Endothelial cell of umbilical vein (primary cell): ENCODE measurements at regions of chr20 and their contacts with region 1.

Region 1: GRCh38 chr20:32902456-32903420 is 44.0 kb downstream of the EFCAB8 start:
- DNase-seq: peak; percentile 32
- H3K4me3 ChIP-seq: no peak overlapping the region
- H3K27ac ChIP-seq: no peak overlapping the region
- H3K4me1 ChIP-seq: no peaks in the 10 kb centered on the region
- H3K27me3 ChIP-seq: no peaks in the 10 kb centered on the region
- CTCF ChIP-seq: peak; percentile 89 to 90
- POLR2A ChIP-seq: no peak

Region 2: DNA sequence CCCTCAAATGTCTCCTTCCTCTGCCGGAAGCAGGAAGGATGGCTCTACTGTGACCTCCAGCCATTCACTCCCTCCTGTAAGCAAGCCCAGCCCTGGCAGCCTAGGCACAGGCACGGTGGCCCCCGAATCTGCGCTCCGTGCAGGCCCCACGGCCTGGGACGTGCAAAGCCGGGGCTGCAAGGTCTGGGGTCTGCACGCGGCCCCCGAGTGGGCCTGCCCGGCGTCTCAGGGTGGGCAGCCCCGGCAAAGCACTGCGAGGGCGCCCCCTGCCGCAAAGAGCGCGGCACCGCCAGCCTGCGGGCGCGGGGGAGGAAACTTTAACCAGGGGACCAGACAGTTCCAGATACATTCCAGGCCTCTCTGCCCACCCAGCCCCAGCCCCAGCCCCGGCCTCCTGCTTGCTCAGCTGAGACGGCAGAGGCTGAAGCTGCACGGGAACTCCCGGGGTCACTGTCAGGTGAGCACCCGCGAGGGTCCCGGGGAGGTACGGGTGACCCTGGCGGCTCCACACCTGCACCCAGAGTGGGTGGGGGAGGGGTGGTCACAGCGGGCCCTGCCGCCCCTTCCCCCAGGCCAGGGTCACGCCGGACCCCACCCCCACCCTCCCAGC is 445.8 kb before region 1 on chr20:
- CTCF ChIA-PET with region 1: no interaction called
- POLR2A ChIA-PET with region 1: no interaction called
- dilution Hi-C with region 1: no loop called
- intact Hi-C with region 1: no loop called
- DNase-seq: no peak
- H3K4me3 ChIP-seq: no peak overlapping the region
- H3K27ac ChIP-seq: no peak overlapping the region
- H3K4me1 ChIP-seq: peaks cover 20% of the 10 kb centered on the region
- H3K27me3 ChIP-seq: no peaks in the 10 kb centered on the region
- CTCF ChIP-seq: peak; percentile 67 to 75
- POLR2A ChIP-seq: no peak

Region 3: GRCh38 chr20:32930181-32930580 is 27.4 kb after region 1 on chr20:
- CTCF ChIA-PET with region 1: no interaction called
- POLR2A ChIA-PET with region 1: no interaction called
- dilution Hi-C with region 1: no loop called
- intact Hi-C with region 1: no loop called
- DNase-seq: no peak
- H3K4me3 ChIP-seq: no peak overlapping the region
- H3K27ac ChIP-seq: no peak overlapping the region
- H3K4me1 ChIP-seq: no peaks in the 10 kb centered on the region
- H3K27me3 ChIP-seq: peaks cover 0 to 2% of the 10 kb centered on the region in 2 experiments
- CTCF ChIP-seq: no peak
- POLR2A ChIP-seq: no peak

Region 4: GRCh38 chr20:32945710-32946221 is 43.0 kb after region 1 on chr20:
- CTCF ChIA-PET with region 1: interaction called, 104 read pairs
- POLR2A ChIA-PET with region 1: no interaction called
- dilution Hi-C with region 1: no loop called
- intact Hi-C with region 1: loop called (anchors 1 kb)
- DNase-seq: peak; percentile 37
- H3K4me3 ChIP-seq: no peak overlapping the region
- H3K27ac ChIP-seq: no peak overlapping the region
- H3K4me1 ChIP-seq: no peaks in the 10 kb centered on the region
- H3K27me3 ChIP-seq: peaks cover 17 to 29% of the 10 kb centered on the region in 2 experiments
- CTCF ChIP-seq: peak; percentile 23 to 41
- POLR2A ChIP-seq: no peak

Region 5: DNA sequence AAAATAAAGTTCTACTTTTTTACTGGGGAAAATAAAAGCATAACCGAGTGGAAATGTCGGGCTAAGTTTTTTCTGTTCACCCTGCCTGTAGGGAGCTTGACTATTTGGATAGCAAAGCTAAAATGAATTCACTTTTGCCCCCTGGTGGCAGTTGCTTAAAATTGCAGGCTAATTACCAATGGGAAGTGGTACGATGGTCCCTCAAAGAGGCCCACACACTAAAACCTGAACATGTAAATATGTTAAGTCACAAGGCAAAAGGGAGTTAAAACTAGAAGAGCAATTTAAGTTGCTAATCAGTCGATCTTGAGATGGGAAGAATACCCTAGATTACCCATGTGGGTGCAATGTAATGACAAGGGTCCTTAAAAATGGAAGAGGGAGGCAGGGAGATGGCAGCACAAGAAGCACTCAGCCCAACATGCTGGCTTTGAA is 102.4 kb after region 1 on chr20:
- CTCF ChIA-PET with region 1: interaction called, 28 read pairs
- POLR2A ChIA-PET with region 1: no interaction called
- dilution Hi-C with region 1: no loop called
- intact Hi-C with region 1: loop called (anchors 1 kb)
- DNase-seq: no peak
- H3K4me3 ChIP-seq: no peak overlapping the region
- H3K27ac ChIP-seq: no peak overlapping the region
- H3K4me1 ChIP-seq: no peaks in the 10 kb centered on the region
- H3K27me3 ChIP-seq: no peaks in the 10 kb centered on the region
- CTCF ChIP-seq: peak; percentile 34 to 56
- POLR2A ChIP-seq: no peak

Region 6: GRCh38 chr20:33097001-33097400 is 194.3 kb after region 1 on chr20:
- CTCF ChIA-PET with region 1: interaction called, 27 read pairs
- POLR2A ChIA-PET with region 1: no interaction called
- dilution Hi-C with region 1: no loop called
- intact Hi-C with region 1: loop called (anchors 1 kb)
- DNase-seq: no peak
- H3K4me3 ChIP-seq: no peak overlapping the region
- H3K27ac ChIP-seq: no peak overlapping the region
- H3K4me1 ChIP-seq: no peaks in the 10 kb centered on the region
- H3K27me3 ChIP-seq: no peaks in the 10 kb centered on the region
- CTCF ChIP-seq: no peak
- POLR2A ChIP-seq: no peak

Region 7: GRCh38 chr20:33211817-33212424 is 309.2 kb after region 1 on chr20:
- CTCF ChIA-PET with region 1: interaction called, 10 read pairs
- POLR2A ChIA-PET with region 1: no interaction called
- dilution Hi-C with region 1: no loop called
- intact Hi-C with region 1: no loop called
- DNase-seq: peak; percentile 17
- H3K4me3 ChIP-seq: no peak overlapping the region
- H3K27ac ChIP-seq: no peak overlapping the region
- H3K4me1 ChIP-seq: no peaks in the 10 kb centered on the region
- H3K27me3 ChIP-seq: no peaks in the 10 kb centered on the region
- CTCF ChIP-seq: peak; percentile 33 to 44
- POLR2A ChIP-seq: no peak

Region 8: DNA sequence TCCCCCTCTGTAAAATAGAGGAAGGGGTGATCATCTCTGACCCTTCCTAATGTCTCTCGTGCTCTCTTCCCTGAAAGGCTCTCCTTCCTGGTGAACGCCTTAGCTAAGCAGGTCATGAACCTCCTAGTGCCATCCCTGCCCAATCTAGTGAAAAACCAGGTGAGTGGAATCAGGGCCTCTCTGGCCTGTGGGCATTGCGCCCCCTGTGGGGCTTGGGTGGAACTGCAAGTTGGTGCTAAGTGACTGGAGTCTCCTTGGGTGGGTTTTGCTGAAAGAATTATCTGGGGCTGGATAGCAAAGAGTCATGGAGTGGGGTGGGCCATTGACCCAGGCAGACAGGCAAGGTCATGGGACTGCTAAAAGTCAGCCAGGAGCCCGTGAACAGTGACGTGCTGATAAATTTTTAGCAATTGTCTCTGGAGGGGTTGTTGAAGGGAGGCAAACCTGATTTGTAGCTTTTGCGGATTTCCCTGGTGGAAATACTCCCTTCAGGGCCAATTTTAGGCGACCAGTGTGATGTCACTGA is 389.2 kb after region 1 on chr20:
- CTCF ChIA-PET with region 1: interaction called, 17 read pairs
- POLR2A ChIA-PET with region 1: no interaction called
- dilution Hi-C with region 1: no loop called
- intact Hi-C with region 1: loop called (anchors 1 kb)
- DNase-seq: peak; percentile 26
- H3K4me3 ChIP-seq: no peak overlapping the region
- H3K27ac ChIP-seq: no peak overlapping the region
- H3K4me1 ChIP-seq: no peaks in the 10 kb centered on the region
- H3K27me3 ChIP-seq: peaks cover 0 to 2% of the 10 kb centered on the region in 2 experiments
- CTCF ChIP-seq: peak; percentile 94 to 95
- POLR2A ChIP-seq: no peak

Region 9: DNA sequence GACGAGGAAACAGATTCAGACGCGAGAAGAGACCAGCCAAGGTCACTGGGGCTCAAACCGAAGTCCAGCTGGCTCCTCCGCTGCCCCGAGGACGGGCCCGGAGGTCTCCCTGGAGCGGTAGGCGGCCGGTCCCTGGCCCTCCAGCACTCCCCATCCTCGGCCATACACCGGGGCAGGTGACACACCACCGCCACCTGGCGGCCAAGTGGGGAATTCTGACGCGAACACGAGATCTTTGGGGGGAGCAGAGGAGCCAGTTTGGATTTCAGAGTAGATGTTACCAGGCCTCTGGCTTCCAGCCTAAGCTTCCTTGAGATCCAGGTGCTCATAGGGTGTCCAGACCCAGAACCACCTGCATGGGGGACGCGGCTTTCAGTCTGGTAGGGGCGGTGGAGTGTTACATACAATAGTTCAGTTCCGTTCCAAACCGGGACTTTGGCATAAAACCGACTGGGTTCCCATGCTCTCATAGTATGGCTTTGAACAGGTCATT is 396.4 kb after region 1 on chr20:
- CTCF ChIA-PET with region 1: interaction called, 17 read pairs
- POLR2A ChIA-PET with region 1: no interaction called
- dilution Hi-C with region 1: no loop called
- intact Hi-C with region 1: loop called (anchors 1 kb)
- DNase-seq: peak; percentile 54
- H3K4me3 ChIP-seq: no peak overlapping the region
- H3K27ac ChIP-seq: no peak overlapping the region
- H3K4me1 ChIP-seq: no peaks in the 10 kb centered on the region
- H3K27me3 ChIP-seq: peaks cover 0 to 4% of the 10 kb centered on the region in 2 experiments
- CTCF ChIP-seq: peak; percentile 93 to 97
- POLR2A ChIP-seq: no peak